Activated CD8-positive, alpha-beta T cell treated with anti-CD3 and anti-CD28 coated beads, Interleukin-2, amount 10 ng/mL, durations not matched to agents 7 days and 5 days (primary cell): ENCODE measurements at regions of chr11 and their contacts with region 1.

Region 1: GRCh38 chr11:74449369-74449931 is 17.9 kb downstream of the KCNE3 start:
- DNase-seq: peak; percentile 57
- ATAC-seq: peak; percentile 82
- H3K4me3 Mint-ChIP-seq: no peak overlapping the region
- H3K27ac Mint-ChIP-seq: no peak overlapping the region
- H3K4me1 Mint-ChIP-seq: peaks cover 1% of the 10 kb centered on the region
- H3K27me3 Mint-ChIP-seq: peaks cover 15% of the 10 kb centered on the region

Region 2: DNA sequence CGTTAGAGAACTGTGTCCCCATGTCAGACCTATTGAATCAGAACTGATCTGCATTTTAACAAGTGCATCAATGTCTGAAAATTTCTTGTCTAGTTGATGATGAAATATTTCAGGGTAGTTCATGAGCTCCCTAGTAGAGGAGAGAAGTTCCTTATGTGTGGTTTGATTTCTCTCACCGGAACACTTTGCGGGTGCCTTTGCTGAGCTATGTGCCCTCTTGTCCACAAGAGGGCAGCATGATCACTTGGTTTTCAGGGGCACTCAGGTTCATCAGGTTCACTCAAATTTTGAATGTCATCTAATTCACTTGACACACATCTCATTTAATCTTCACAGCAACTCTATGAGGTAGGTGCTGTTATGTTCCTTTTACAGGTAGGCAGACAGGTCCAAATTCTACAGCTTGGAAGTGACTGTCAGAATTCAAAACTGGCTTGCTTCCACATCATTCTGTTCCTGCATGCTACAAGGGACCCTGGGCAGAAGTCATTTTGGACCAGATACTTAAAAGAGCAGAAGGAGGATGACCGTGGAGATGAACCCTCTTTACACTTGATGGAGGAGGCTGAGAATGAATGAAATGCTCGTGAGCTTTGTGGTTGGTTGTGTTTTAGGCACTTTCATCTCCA is 193.6 kb before region 1 on chr11:
- CTCF ChIA-PET with region 1: interaction called, 57 read pairs
- POLR2A ChIA-PET with region 1: no interaction called
- DNase-seq: peak; percentile 68
- ATAC-seq: peak; percentile 69
- H3K4me3 Mint-ChIP-seq: no peak overlapping the region
- H3K27ac Mint-ChIP-seq: no peak overlapping the region
- H3K4me1 Mint-ChIP-seq: peaks cover 2% of the 10 kb centered on the region
- H3K27me3 Mint-ChIP-seq: no peaks in the 10 kb centered on the region

Region 3: GRCh38 chr11:74388678-74389327 is 60.6 kb before region 1 on chr11:
- CTCF ChIA-PET with region 1: interaction called, 168 read pairs
- POLR2A ChIA-PET with region 1: no interaction called
- DNase-seq: peak; percentile 78
- ATAC-seq: peak; percentile 80
- H3K4me3 Mint-ChIP-seq: no peak overlapping the region
- H3K27ac Mint-ChIP-seq: no peak overlapping the region
- H3K4me1 Mint-ChIP-seq: peaks cover 8% of the 10 kb centered on the region
- H3K27me3 Mint-ChIP-seq: no peaks in the 10 kb centered on the region

Region 4: DNA sequence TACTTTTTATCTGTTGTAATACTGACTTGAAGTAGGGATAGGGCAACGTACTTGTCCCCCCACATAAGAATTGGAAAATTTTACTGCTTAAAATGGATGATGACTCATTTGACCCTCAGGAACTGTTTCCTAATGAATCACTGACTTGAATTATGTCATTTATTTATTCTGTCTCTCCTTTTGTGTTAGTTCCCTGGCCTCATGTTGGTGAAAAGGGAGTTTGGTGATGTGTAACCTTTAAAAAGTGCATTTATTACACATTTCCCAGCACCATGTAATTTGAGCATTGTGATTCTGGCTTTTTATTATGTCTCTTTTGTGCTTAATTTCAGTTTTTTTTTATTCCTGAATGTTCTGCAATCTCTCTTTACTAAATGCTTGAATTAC is 30.9 kb before region 1 on chr11:
- CTCF ChIA-PET with region 1: no interaction called
- POLR2A ChIA-PET with region 1: no interaction called
- DNase-seq: no peak
- ATAC-seq: no peak
- H3K4me3 Mint-ChIP-seq: no peak overlapping the region
- H3K27ac Mint-ChIP-seq: no peak overlapping the region
- H3K4me1 Mint-ChIP-seq: peaks cover 9% of the 10 kb centered on the region
- H3K27me3 Mint-ChIP-seq: peaks cover 3% of the 10 kb centered on the region

Region 5: DNA sequence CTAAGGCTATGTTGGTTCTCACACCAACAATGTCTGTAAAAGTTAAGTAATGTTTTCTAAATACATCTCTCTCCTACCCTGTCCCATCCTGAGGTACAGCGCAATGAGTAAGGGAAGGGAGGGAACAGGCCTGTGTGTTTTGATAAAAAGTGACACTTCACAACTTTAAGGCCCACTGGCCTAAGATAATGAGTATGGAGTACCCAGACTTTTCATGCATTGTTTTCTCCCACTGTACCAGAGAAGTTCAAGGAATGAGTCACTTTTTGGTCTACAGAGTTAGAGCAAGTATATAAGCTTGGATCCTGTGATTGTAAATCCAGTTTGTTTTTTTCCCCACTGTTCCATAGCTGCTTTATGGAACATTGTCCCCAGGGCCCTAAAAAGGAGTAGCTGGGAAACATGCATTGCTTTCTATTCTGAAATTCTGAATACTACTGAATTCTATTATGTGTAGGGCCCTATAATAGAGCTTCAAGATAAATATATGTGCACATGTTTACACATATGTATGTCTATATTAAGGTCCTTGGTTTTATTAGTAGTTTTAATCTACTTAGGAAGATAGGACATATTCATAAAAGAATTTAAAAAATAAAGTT is 11.9 kb before region 1 on chr11:
- CTCF ChIA-PET with region 1: interaction called, 19 read pairs
- POLR2A ChIA-PET with region 1: no interaction called
- DNase-seq: no peak
- ATAC-seq: no peak
- H3K4me3 Mint-ChIP-seq: no peak overlapping the region
- H3K27ac Mint-ChIP-seq: no peak overlapping the region
- H3K4me1 Mint-ChIP-seq: no peaks in the 10 kb centered on the region
- H3K27me3 Mint-ChIP-seq: peaks cover 3% of the 10 kb centered on the region

Region 6: DNA sequence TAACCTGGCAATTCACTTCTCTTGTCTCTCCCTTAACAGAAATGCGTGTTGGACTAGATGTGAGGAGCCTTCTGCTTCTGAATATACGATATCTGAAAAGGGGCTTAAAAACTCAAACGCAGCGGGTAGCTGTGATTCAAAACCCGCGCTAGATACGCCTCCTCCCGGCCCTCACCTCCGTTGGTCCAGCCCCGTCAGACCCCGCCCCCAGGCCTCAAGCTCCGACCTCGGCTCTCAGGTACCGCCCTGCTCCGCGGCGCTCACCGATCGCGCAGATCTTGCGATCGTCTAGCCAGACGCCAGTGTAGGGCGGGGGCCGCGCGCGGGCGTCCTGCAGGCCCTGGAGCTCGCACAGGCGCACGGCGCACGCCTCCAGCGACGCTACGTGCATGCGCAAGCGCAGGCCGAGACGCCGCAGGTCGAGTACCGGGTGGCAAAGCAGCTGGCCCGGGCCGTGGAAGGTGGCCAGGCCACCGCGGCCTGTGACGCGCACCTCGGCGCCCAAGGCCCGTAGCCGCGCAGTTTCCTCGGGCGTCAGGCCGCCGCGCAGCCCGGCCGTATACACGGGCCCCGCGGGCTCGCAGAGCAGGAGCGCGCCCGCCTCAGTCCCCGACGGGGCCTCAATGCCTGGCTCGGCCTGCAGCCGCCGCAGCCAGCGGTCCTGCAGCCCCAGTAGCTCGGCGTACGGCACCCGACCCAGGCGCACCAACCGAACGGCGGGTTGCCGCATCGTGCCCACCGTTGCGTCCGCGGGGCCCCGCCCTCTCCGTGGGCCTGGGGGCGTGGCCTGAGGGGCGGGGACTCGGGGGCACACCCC is 43.7 kb after region 1 on chr11 and contains the start of gene LIPT2:
- CTCF ChIA-PET with region 1: interaction called, 13 read pairs
- POLR2A ChIA-PET with region 1: no interaction called
- DNase-seq: peak; percentile 99
- ATAC-seq: peak; percentile 99
- H3K4me3 Mint-ChIP-seq: peak within 1 kb of the TSS; percentile 75
- H3K27ac Mint-ChIP-seq: peak within 1 kb of the TSS; percentile 78
- H3K4me1 Mint-ChIP-seq: peaks cover 18% of the 10 kb centered on the region
- H3K27me3 Mint-ChIP-seq: no peaks in the 10 kb centered on the region
- total RNA-seq, gene LIPT2: 3.1 to 4.4 TPM